ENCODE measurements at regions of chr6 and their contacts with region 1.

Region 1: GRCh38 chr6:10429638-10430427 is 15.0 kb upstream of the TFAP2A start:
- H3K4me3 ChIP-seq: no peak overlapping the region
- H3K27ac ChIP-seq: no peak overlapping the region
- H3K4me1 ChIP-seq: no peaks in the 10 kb centered on the region
- CTCF ChIP-seq: peak; percentile 71

Region 2: GRCh38 chr6:8983188-8983688 is 1446.6 kb before region 1 on chr6:
- CTCF ChIA-PET with region 1: interaction called, 18 read pairs
- POLR2A ChIA-PET with region 1: no interaction called
- H3K4me3 ChIP-seq: no peak overlapping the region
- H3K27ac ChIP-seq: no peak overlapping the region
- H3K4me1 ChIP-seq: peaks cover 3% of the 10 kb centered on the region
- CTCF ChIP-seq: peak; percentile 84

Region 3: DNA sequence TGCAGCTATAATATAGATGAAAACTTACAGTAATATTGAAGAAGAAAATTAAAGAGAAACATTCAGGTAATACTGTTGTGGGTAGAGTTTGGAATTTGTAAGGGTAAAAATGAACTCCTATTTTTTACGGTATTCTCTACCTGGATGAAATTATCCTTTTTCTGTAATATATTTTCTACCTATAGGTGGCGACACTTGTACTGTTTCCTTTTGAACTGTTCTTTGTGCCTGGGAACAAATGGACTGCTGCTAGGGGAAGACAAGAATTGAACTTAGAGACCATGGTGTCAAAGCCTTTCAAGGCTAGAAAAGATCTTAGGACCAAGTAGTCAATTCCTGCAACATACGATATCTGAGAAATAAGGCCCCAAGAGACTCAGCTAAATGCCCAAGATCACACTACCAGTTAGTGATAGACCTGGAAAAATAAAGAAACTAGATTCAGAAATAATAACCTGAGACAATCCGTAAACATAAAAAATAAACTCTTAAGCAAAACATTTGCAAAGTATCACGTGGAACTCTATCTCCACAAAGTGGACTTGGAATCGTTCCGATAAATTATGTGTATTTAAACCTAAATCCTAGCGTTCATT is 398.8 kb before region 1 on chr6:
- CTCF ChIA-PET with region 1: interaction called, 12 read pairs
- POLR2A ChIA-PET with region 1: no interaction called
- H3K4me3 ChIP-seq: no peak overlapping the region
- H3K27ac ChIP-seq: no peak overlapping the region
- H3K4me1 ChIP-seq: peaks cover 17% of the 10 kb centered on the region
- CTCF ChIP-seq: peak; percentile 26; the same call in 1 of the 2 replicates

Region 4: DNA sequence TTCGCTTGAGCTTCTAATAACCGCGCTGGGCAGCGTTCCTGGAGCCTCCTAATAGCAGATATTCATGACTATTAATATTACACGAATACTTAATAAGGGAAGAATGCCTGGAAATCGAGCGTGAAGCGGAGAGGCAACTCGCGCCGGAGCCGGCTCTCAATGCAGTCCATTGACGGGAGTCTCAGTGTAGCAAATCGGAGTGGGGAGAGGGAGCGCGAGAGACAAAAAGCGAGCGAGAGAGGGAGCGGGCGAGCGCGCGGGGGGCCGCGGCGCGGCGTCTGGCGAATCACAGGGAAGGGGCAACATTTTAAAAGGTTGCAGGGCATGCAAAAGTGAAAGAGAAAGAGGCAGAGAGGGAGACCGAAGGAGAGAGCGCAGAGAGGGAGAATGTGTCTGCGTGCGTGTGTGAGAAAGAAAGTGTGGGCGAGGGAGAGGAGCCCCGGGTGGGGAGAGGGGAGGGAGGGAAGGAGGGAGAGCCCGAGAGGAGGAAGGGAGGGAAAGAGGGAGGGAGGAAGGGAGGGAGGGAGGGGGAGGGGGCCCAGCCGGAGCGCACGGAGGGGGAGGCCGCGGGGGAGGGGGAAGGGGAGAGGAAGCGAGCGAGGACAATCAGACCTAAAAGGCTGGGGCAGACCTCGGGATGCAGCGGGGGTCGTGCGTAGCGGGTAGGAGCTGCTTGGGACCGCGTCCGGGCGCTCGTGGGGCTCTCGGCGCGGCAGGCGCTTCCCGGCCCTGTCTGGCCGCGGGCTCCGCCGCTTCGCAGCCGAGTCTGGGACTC is 17.7 kb before region 1 on chr6:
- CTCF ChIA-PET with region 1: interaction called, 42 read pairs
- POLR2A ChIA-PET with region 1: interaction called, 112 read pairs
- H3K4me3 ChIP-seq: peak overlapping the region; percentile 88
- H3K27ac ChIP-seq: peak overlapping the region; percentile 99
- H3K4me1 ChIP-seq: peaks cover 14% of the 10 kb centered on the region
- CTCF ChIP-seq: no peak; the same call in 1 of the 2 replicates

Measured in HEK293 (cell line).